ENCODE measurements at regions of chr2 and their contacts with region 1.

Region 1: GRCh38 chr2:186995092-186995491 is 146.1 kb upstream of the ZSWIM2 start:
- DNase-seq: no peak
- H3K4me3 ChIP-seq: no peak overlapping the region
- H3K27ac ChIP-seq: no peak overlapping the region
- H3K4me1 ChIP-seq: no peaks in the 10 kb centered on the region
- H3K27me3 ChIP-seq: no peaks in the 10 kb centered on the region
- CTCF ChIP-seq: no peak
- EP300 ChIP-seq: no peak
- POLR2A ChIP-seq: no peak

Region 2: GRCh38 chr2:186589612-186590349 is 405.3 kb before region 1 on chr2 and contains the start of gene ITGAV:
- in situ Hi-C with region 1: no loop called
- intact Hi-C with region 1: no loop called
- DNase-seq: peak; percentile 95
- H3K4me3 ChIP-seq: peak within 1 kb of the TSS; percentile 77 to 92 (median 86)
- H3K27ac ChIP-seq: peak within 1 kb of the TSS; percentile 96
- H3K4me1 ChIP-seq: peaks cover 6 to 30% (median 15%) of the 10 kb centered on the region in 4 donors
- H3K27me3 ChIP-seq: no peaks in the 10 kb centered on the region
- CTCF ChIP-seq: peak in 1 of 5 experiments; percentile 18
- EP300 ChIP-seq: peak; percentile 18
- POLR2A ChIP-seq: peak; percentile 97
- total RNA-seq, gene ITGAV: 28.9 to 67.0 (median 52.1) TPM

Region 3: GRCh38 chr2:186709529-186710450 is 285.3 kb before region 1 on chr2:
- in situ Hi-C with region 1: no loop called
- intact Hi-C with region 1: no loop called
- DNase-seq: no peak
- H3K4me3 ChIP-seq: no peak overlapping the region
- H3K27ac ChIP-seq: no peak overlapping the region
- H3K4me1 ChIP-seq: no peaks in the 10 kb centered on the region
- H3K27me3 ChIP-seq: no peaks in the 10 kb centered on the region
- CTCF ChIP-seq: no peak
- EP300 ChIP-seq: no peak
- POLR2A ChIP-seq: no peak

Region 4: GRCh38 chr2:187009483-187010229 is 14.6 kb after region 1 on chr2:
- in situ Hi-C with region 1: no loop called
- intact Hi-C with region 1: loop called (anchors 1 kb)
- DNase-seq: no peak
- H3K4me3 ChIP-seq: no peak overlapping the region
- H3K27ac ChIP-seq: no peak overlapping the region
- H3K4me1 ChIP-seq: no peaks in the 10 kb centered on the region
- H3K27me3 ChIP-seq: no peaks in the 10 kb centered on the region
- CTCF ChIP-seq: no peak
- EP300 ChIP-seq: no peak
- POLR2A ChIP-seq: no peak